ENCODE measurements at regions of chr4 and their contacts with region 1.

Region 1: GRCh38 chr4:186651624-186652023 is 72.0 kb downstream of the FAT1 start:
- DNase-seq: no peak
- H3K4me3 ChIP-seq: no peak overlapping the region
- CTCF ChIP-seq: no peak

Region 2: GRCh38 chr4:186669159-186669731 is 17.6 kb after region 1 on chr4:
- CTCF ChIA-PET with region 1: interaction called, 13 read pairs
- POLR2A ChIA-PET with region 1: no interaction called
- DNase-seq: peak; percentile 28
- H3K4me3 ChIP-seq: peak overlapping the region; percentile 19
- CTCF ChIP-seq: no peak